GM12878 (cell line): ENCODE measurements at regions of chr15 and their contacts with region 1.

Region 1: GRCh38 chr15:73265536-73266153 is 103.1 kb downstream of the HCN4 start:
- DNase-seq: no peak
- ATAC-seq: peak; percentile 96
- H3K4me3 ChIP-seq: no peak overlapping the region
- H3K27ac ChIP-seq: no peak overlapping the region
- H3K4me1 ChIP-seq: no peaks in the 10 kb centered on the region
- H3K27me3 ChIP-seq: no peaks in the 10 kb centered on the region
- CTCF ChIP-seq: peak; percentile 82 to 92 (median 82)
- EP300 ChIP-seq: no peak
- POLR2A ChIP-seq: no peak
- RAD21 ChIP-seq: peak; percentile 42

Region 2: DNA sequence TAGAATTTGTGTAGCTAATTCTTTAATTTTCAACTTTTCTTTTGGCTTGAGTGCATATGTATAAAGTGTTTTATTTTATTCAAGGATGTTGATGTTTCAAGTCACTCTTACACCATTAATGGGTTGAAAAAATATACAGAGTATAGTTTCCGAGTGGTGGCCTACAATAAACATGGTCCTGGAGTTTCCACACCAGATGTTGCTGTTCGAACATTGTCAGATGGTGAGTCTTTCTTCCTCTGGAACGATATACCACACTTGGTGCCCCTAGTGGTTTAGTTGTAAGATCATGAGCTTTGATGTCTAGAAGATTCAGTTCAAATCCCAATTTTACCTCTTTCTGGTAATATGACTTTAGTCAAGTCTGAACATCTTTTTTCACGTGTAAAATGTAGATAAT is 16.1 kb before region 1 on chr15:
- CTCF ChIA-PET with region 1: interaction called, 78 read pairs
- POLR2A ChIA-PET with region 1: no interaction called
- RAD21 ChIA-PET with region 1: interaction called, 3 read pairs
- SMC1A ChIA-PET with region 1: interaction called, 16 read pairs
- in situ Hi-C with region 1: no loop called
- intact Hi-C with region 1: no loop called
- DNase-seq: no peak
- ATAC-seq: no peak
- H3K4me3 ChIP-seq: no peak overlapping the region
- H3K27ac ChIP-seq: no peak overlapping the region
- H3K4me1 ChIP-seq: no peaks in the 10 kb centered on the region
- H3K27me3 ChIP-seq: no peaks in the 10 kb centered on the region
- CTCF ChIP-seq: no peak
- EP300 ChIP-seq: no peak
- POLR2A ChIP-seq: no peak
- RAD21 ChIP-seq: no peak

Region 3: GRCh38 chr15:73414876-73415275 is 149.2 kb after region 1 on chr15:
- CTCF ChIA-PET with region 1: no interaction called
- POLR2A ChIA-PET with region 1: no interaction called
- RAD21 ChIA-PET with region 1: no interaction called
- SMC1A ChIA-PET with region 1: no interaction called
- in situ Hi-C with region 1: no loop called
- intact Hi-C with region 1: no loop called
- DNase-seq: no peak
- ATAC-seq: no peak
- H3K4me3 ChIP-seq: no peak overlapping the region
- H3K27ac ChIP-seq: no peak overlapping the region
- H3K4me1 ChIP-seq: no peaks in the 10 kb centered on the region
- H3K27me3 ChIP-seq: no peaks in the 10 kb centered on the region
- CTCF ChIP-seq: no peak
- EP300 ChIP-seq: no peak
- POLR2A ChIP-seq: no peak
- RAD21 ChIP-seq: no peak